ENCODE measurements at regions of chr7 and their contacts with region 1.

Region 1: GRCh38 chr7:50369143-50370026 is 64.9 kb downstream of the IKZF1 start:
- DNase-seq: peak; percentile 51
- ATAC-seq: peak; percentile 77
- H3K4me3 ChIP-seq: no peak overlapping the region
- H3K27ac ChIP-seq: peak overlapping the region; percentile 17; the same call in 1 of the 2 replicates
- H3K4me1 ChIP-seq: peaks cover 23% of the 10 kb centered on the region
- H3K27me3 ChIP-seq: no peaks in the 10 kb centered on the region
- CTCF ChIP-seq: peak; percentile 70 to 82 (median 81)
- EP300 ChIP-seq: no peak
- POLR2A ChIP-seq: no peak
- RAD21 ChIP-seq: peak; percentile 96

Region 2: GRCh38 chr7:50119815-50120637 is 249.4 kb before region 1 on chr7:
- CTCF ChIA-PET with region 1: interaction called, 35 read pairs
- POLR2A ChIA-PET with region 1: interaction called, 3 read pairs
- RAD21 ChIA-PET with region 1: interaction called, 6 read pairs
- SMC1A ChIA-PET with region 1: interaction called, 28 read pairs
- in situ Hi-C with region 1: no loop called
- intact Hi-C with region 1: loop called (anchors 5 kb)
- DNase-seq: no peak
- ATAC-seq: peak; percentile 98
- H3K4me3 ChIP-seq: no peak overlapping the region
- H3K27ac ChIP-seq: no peak overlapping the region
- H3K4me1 ChIP-seq: peaks cover 4% of the 10 kb centered on the region; the same call in 1 of the 2 replicates
- H3K27me3 ChIP-seq: no peaks in the 10 kb centered on the region
- CTCF ChIP-seq: peak; percentile 68 to 70 (median 69)
- EP300 ChIP-seq: no peak
- POLR2A ChIP-seq: no peak
- RAD21 ChIP-seq: peak; percentile 77

Region 3: DNA sequence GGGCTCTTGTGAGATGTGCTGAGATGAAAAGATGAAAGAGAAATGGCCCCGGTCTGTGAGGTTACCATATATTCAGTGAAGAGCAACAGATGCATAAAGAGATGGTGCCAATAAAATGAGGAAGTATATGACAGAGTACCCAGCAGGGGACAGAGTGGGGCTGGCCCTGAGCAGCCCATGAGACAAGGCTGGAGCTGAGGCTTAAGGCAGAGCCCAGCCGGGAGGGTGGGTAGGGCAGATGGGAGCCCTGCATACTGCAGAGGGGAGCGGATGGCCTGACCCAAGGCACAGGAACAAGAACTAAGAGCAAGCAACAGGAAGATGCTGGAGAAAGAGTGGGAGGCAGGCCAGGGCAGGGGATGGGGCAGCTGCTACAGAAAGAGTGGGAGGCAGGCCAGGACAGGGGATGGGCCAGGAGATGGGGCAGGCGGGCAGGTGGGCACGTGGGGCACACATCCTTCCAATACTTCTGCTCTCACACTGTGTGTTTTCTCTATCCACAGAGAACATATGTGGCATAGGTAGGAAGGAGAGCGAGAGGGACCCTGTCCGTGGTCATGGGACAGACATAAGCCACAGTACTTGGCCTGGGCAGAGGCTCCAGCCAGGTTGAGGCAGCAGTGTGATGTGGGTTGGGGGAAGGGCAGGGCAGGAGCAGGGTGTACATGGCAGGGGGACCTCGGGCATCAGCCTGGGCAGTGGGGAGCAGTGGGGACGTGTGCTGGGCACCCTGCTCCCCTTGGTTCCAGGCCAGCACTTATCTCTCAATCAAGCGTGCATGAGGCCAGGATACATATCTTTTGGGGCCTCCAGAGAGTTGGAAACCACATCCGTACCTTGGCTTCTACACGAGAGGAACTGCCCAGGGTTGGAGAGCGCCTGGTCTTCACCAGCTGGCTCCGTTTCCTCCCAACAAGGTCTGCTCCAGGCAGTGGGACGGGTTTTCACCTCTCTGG is 156.4 kb before region 1 on chr7:
- CTCF ChIA-PET with region 1: interaction called, 152 read pairs
- POLR2A ChIA-PET with region 1: no interaction called
- RAD21 ChIA-PET with region 1: interaction called, 10 read pairs
- SMC1A ChIA-PET with region 1: interaction called, 274 read pairs
- in situ Hi-C with region 1: no loop called
- intact Hi-C with region 1: no loop called
- DNase-seq: no peak
- ATAC-seq: peak; percentile 70
- H3K4me3 ChIP-seq: no peak overlapping the region
- H3K27ac ChIP-seq: no peak overlapping the region
- H3K4me1 ChIP-seq: peaks cover 9% of the 10 kb centered on the region
- H3K27me3 ChIP-seq: no peaks in the 10 kb centered on the region
- CTCF ChIP-seq: peak; percentile 20 to 47 (median 25); a peak in 3 of 6 replicates
- EP300 ChIP-seq: 0 out of 4 replicates have a peak, but pooled peaks of 1 of the 2 experiments have one; percentile 11
- POLR2A ChIP-seq: no peak
- RAD21 ChIP-seq: peak; percentile 61

Region 4: DNA sequence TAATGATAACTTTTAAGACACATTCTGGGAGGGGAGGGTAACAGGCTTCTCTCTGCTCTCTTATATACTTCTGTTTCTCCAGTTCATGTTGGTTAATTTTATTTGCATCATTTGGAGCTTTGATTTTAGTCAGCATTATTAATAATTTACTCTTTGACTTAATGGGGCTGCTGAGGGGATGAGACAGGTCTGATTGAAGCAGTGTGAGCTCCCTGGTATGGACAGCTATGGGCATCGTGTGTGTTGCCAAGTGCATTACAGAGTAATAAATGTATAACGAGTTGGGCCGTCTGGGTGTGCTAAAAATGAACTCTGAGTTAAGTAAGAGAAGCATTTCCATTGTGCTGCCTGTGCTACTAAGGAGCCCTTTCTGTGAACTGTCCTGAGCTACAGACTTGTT is 96.6 kb before region 1 on chr7:
- CTCF ChIA-PET with region 1: interaction called, 43 read pairs
- POLR2A ChIA-PET with region 1: interaction called, 3 read pairs
- RAD21 ChIA-PET with region 1: interaction called, 38 read pairs
- SMC1A ChIA-PET with region 1: interaction called, 67 read pairs
- in situ Hi-C with region 1: no loop called
- intact Hi-C with region 1: loop called (anchors 2 kb)
- DNase-seq: no peak
- ATAC-seq: peak; percentile 47
- H3K4me3 ChIP-seq: no peak overlapping the region
- H3K27ac ChIP-seq: no peak overlapping the region
- H3K4me1 ChIP-seq: peaks cover 76% of the 10 kb centered on the region
- H3K27me3 ChIP-seq: no peaks in the 10 kb centered on the region
- CTCF ChIP-seq: no peak
- EP300 ChIP-seq: no peak
- POLR2A ChIP-seq: no peak
- RAD21 ChIP-seq: no peak

Region 5: DNA sequence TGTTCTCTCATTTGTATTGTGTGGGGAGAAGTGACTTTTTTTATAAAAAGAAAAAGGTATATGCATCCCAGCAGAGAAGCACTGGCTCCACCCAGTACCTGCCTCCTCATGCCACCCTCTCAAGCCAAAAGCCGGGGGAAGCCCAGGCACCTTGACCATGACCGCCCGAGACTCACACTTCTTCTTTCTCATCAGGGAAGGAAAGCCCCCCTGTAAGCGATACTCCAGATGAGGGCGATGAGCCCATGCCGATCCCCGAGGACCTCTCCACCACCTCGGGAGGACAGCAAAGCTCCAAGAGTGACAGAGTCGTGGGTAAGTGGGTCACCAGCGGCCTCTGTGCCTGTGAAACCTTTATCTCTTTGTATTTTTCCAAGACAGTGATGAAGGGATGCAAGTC is 41.9 kb before region 1 on chr7:
- CTCF ChIA-PET with region 1: interaction called, 6 read pairs
- POLR2A ChIA-PET with region 1: no interaction called
- RAD21 ChIA-PET with region 1: interaction called, 11 read pairs
- SMC1A ChIA-PET with region 1: interaction called, 20 read pairs
- in situ Hi-C with region 1: no loop called
- intact Hi-C with region 1: no loop called
- DNase-seq: no peak
- ATAC-seq: peak; percentile 80
- H3K4me3 ChIP-seq: no peak overlapping the region
- H3K27ac ChIP-seq: peak overlapping the region; percentile 44
- H3K4me1 ChIP-seq: peaks cover 44% of the 10 kb centered on the region
- H3K27me3 ChIP-seq: no peaks in the 10 kb centered on the region
- CTCF ChIP-seq: no peak; a peak in 1 of 6 replicates
- EP300 ChIP-seq: peak in 1 of 2 experiments; percentile 83; a peak in 2 of 4 replicates
- POLR2A ChIP-seq: no peak
- RAD21 ChIP-seq: peak; percentile 19; the same call in 1 of the 2 replicates

Region 6: GRCh38 chr7:50397320-50397970 is 28.1 kb after region 1 on chr7:
- CTCF ChIA-PET with region 1: interaction called, 3 read pairs
- POLR2A ChIA-PET with region 1: no interaction called
- RAD21 ChIA-PET with region 1: interaction called, 3 read pairs
- SMC1A ChIA-PET with region 1: interaction called, 13 read pairs
- in situ Hi-C with region 1: no loop called
- intact Hi-C with region 1: no loop called
- DNase-seq: peak; percentile 64
- ATAC-seq: peak; percentile 88
- H3K4me3 ChIP-seq: 0 out of 2 replicates have a peak overlapping the region, but pooled peaks have one; percentile 6
- H3K27ac ChIP-seq: peak overlapping the region; percentile 22
- H3K4me1 ChIP-seq: peaks cover 38% of the 10 kb centered on the region
- H3K27me3 ChIP-seq: no peaks in the 10 kb centered on the region
- CTCF ChIP-seq: no peak
- EP300 ChIP-seq: peak in 1 of 2 experiments; percentile 48; a peak in 1 of 4 replicates
- POLR2A ChIP-seq: no peak
- RAD21 ChIP-seq: no peak

Region 7: DNA sequence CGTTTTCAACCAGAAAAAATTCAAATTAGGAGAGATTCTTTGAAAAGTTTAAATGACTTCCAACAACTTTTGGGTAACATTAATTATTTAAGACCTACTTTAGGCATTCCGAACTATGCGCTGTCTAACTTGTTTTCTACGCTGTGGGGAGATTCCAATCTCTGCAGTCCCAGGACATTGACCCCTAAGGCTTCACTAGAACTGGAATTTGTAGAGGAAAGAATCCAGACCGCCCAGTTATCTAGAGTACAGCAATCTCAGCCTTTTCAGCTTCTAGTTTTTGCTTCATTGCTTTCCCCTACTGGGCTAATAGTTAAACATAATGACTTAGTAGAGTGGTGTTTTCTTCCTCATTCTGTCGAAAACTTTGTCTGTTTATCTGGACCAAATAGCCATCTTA is 210.7 kb after region 1 on chr7:
- CTCF ChIA-PET with region 1: no interaction called
- POLR2A ChIA-PET with region 1: no interaction called
- RAD21 ChIA-PET with region 1: no interaction called
- SMC1A ChIA-PET with region 1: no interaction called
- in situ Hi-C with region 1: no loop called
- intact Hi-C with region 1: no loop called
- DNase-seq: no peak
- ATAC-seq: no peak
- H3K4me3 ChIP-seq: no peak overlapping the region
- H3K27ac ChIP-seq: no peak overlapping the region
- H3K4me1 ChIP-seq: no peaks in the 10 kb centered on the region
- H3K27me3 ChIP-seq: no peaks in the 10 kb centered on the region; a peak in 1 of 4 replicates
- CTCF ChIP-seq: no peak
- EP300 ChIP-seq: no peak
- POLR2A ChIP-seq: no peak
- RAD21 ChIP-seq: no peak

Region 8: DNA sequence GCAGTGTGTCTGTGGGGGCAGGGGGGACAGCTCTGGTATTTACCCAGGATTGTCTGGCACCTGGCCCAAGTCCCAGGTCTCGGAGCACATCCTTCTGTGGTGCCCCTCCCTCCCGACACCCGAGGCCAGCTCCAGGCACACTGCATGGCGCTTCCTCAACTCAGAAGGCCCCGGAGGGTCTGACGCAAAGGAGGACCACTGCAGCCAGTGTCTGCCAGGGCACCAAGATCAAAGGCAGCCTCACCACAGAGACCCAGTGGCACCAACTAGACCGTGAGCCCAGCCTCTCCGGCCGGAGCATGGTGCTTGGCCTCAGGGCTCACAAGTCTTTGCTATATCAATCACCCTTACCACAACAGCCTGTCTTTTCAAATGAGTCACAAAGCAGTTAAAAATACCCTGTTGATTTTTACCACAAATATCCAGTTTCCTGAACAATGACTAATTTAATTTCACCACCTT is 295.1 kb after region 1 on chr7:
- CTCF ChIA-PET with region 1: no interaction called
- POLR2A ChIA-PET with region 1: no interaction called
- RAD21 ChIA-PET with region 1: no interaction called
- SMC1A ChIA-PET with region 1: no interaction called
- in situ Hi-C with region 1: no loop called
- intact Hi-C with region 1: no loop called
- DNase-seq: no peak
- ATAC-seq: peak; percentile 84
- H3K4me3 ChIP-seq: no peak overlapping the region
- H3K27ac ChIP-seq: no peak overlapping the region; the same call in 1 of the 2 replicates
- H3K4me1 ChIP-seq: peaks cover 42% of the 10 kb centered on the region
- H3K27me3 ChIP-seq: peaks cover 0 to 3% of the 10 kb centered on the region in 2 experiments; a peak in 3 of 4 replicates
- CTCF ChIP-seq: no peak
- EP300 ChIP-seq: peak in 1 of 2 experiments; percentile 12; a peak in 1 of 4 replicates
- POLR2A ChIP-seq: no peak
- RAD21 ChIP-seq: no peak

Measured in GM12878 (cell line).